CD4-positive, alpha-beta T cell (primary cell): ENCODE measurements at regions of chr12 and their contacts with region 1.

Region 1: DNA sequence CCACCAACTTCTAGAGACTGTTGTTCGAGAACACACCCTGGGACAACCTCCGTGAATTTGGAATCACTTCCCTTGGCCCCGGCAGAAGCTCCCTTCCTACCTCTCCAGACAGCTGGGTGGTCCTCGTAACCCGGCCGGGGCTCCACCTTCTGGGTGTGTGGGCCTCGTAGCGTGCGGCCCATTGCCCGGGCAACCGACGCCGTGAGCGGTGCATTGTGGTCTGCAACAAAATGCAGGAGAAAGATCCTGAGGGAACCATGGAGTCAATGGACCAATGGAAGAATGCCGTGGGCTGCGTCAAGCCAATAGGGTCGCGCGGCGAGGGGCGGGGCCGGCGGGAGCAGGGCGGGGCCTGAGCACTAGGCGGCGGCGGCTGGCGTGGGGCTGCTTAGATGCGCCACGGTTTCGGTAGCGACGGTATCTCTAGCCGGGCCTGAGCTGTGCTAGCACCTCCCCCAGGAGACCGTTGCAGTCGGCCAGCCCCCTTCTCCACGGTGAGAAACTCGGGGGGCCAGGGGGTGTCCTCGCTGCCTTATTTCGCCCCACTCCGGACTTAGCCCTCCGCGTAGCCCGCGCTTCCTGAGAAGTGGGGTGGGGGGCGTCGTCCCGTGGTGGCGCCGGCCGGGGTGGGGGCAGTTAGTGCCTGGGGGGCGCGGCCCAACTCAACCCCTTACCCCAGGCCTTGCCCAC is at the start of gene DYNLL1:
- DNase-seq: peak; percentile 95 to 98 (median 97)
- ATAC-seq: peak; percentile 96
- H3K4me3 ChIP-seq: peak within 1 kb of the TSS; percentile 82
- H3K4me3 Mint-ChIP-seq: peak within 1 kb of the TSS; percentile 92
- H3K27ac ChIP-seq: peak within 1 kb of the TSS; percentile 74 to 79
- H3K27ac Mint-ChIP-seq: peak within 1 kb of the TSS; percentile 82
- H3K4me1 ChIP-seq: peaks cover 18% of the 10 kb centered on the region
- H3K4me1 Mint-ChIP-seq: peaks cover 44% of the 10 kb centered on the region
- H3K27me3 ChIP-seq: no peaks in the 10 kb centered on the region
- H3K27me3 Mint-ChIP-seq: no peaks in the 10 kb centered on the region
- CTCF ChIP-seq: no peak
- total RNA-seq, gene DYNLL1: 23.6 to 24.5 TPM

Region 2: GRCh38 chr12:120356567-120357030 is 139.3 kb before region 1 on chr12:
- CTCF ChIA-PET with region 1: no interaction called
- POLR2A ChIA-PET with region 1: no interaction called
- intact Hi-C with region 1: loop called in 1 of 2 experiments (anchors 2 kb)
- DNase-seq: peak; percentile 56 to 81 (median 65)
- ATAC-seq: peak; percentile 88
- H3K4me3 ChIP-seq: no peak overlapping the region
- H3K4me3 Mint-ChIP-seq: no peak overlapping the region
- H3K27ac ChIP-seq: no peak overlapping the region
- H3K27ac Mint-ChIP-seq: no peak overlapping the region
- H3K4me1 ChIP-seq: peaks cover 5% of the 10 kb centered on the region
- H3K4me1 Mint-ChIP-seq: no peaks in the 10 kb centered on the region
- H3K27me3 ChIP-seq: peaks cover 18 to 28% of the 10 kb centered on the region in 2 experiments
- H3K27me3 Mint-ChIP-seq: peaks cover 54% of the 10 kb centered on the region
- CTCF ChIP-seq: peak; percentile 91

Region 3: GRCh38 chr12:120437754-120438494 is 57.9 kb before region 1 on chr12 and contains the start of gene COX6A1:
- CTCF ChIA-PET with region 1: interaction called, 3 read pairs
- POLR2A ChIA-PET with region 1: interaction called, 14 read pairs
- intact Hi-C with region 1: loop called in 1 of 2 experiments (anchors 5 kb)
- DNase-seq: peak; percentile 91 to 100 (median 96)
- ATAC-seq: peak; percentile 94
- H3K4me3 ChIP-seq: peak within 1 kb of the TSS; percentile 88
- H3K4me3 Mint-ChIP-seq: peak within 1 kb of the TSS; percentile 97
- H3K27ac ChIP-seq: peak within 1 kb of the TSS; percentile 69 to 88
- H3K27ac Mint-ChIP-seq: peak within 1 kb of the TSS; percentile 94
- H3K4me1 ChIP-seq: peaks cover 26% of the 10 kb centered on the region
- H3K4me1 Mint-ChIP-seq: peaks cover 31% of the 10 kb centered on the region
- H3K27me3 ChIP-seq: no peaks in the 10 kb centered on the region
- H3K27me3 Mint-ChIP-seq: no peaks in the 10 kb centered on the region
- CTCF ChIP-seq: no peak
- total RNA-seq, gene COX6A1: 112 to 116 TPM

Region 4: DNA sequence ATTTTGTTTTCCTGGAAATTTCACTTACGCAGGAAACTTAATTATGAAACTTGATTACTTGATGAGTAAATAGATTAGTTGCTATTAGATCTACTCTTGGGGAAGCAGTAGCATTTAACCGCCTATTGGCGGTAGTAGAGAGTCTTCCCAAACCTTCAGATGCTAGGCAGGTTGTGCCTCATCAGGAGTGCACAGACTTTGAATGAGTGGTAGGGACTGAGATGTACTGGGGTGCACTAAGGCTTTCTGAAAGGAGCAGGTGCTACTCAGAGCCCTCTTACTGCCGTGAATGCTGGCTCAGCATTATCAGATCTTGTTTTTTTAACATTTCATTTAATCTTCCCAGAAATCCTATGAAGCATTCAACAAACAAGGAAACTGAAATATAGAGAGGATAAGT is 41.9 kb before region 1 on chr12:
- CTCF ChIA-PET with region 1: interaction called, 4 read pairs
- POLR2A ChIA-PET with region 1: interaction called, 3 read pairs
- intact Hi-C with region 1: loop called in 1 of 2 experiments (anchors 5 kb)
- DNase-seq: peak in 4 of 14 experiments; percentile 32 to 64 (median 57)
- ATAC-seq: peak; percentile 95
- H3K4me3 ChIP-seq: no peak overlapping the region
- H3K4me3 Mint-ChIP-seq: peak overlapping the region; percentile 38
- H3K27ac ChIP-seq: no peak overlapping the region
- H3K27ac Mint-ChIP-seq: peak overlapping the region; percentile 55
- H3K4me1 ChIP-seq: peaks cover 9% of the 10 kb centered on the region
- H3K4me1 Mint-ChIP-seq: peaks cover 8% of the 10 kb centered on the region
- H3K27me3 ChIP-seq: no peaks in the 10 kb centered on the region
- H3K27me3 Mint-ChIP-seq: no peaks in the 10 kb centered on the region
- CTCF ChIP-seq: peak; percentile 61

Region 5: GRCh38 chr12:120528861-120529525 is 33.1 kb after region 1 on chr12 and contains the start of gene COQ5:
- CTCF ChIA-PET with region 1: no interaction called
- POLR2A ChIA-PET with region 1: interaction called, 24 read pairs
- intact Hi-C with region 1: loop called (anchors 1 to 2 kb)
- DNase-seq: peak; percentile 70 to 89 (median 79)
- ATAC-seq: peak; percentile 97
- H3K4me3 ChIP-seq: peak within 1 kb of the TSS; percentile 92
- H3K4me3 Mint-ChIP-seq: peak within 1 kb of the TSS; percentile 100
- H3K27ac ChIP-seq: peak within 1 kb of the TSS; percentile 69 to 73
- H3K27ac Mint-ChIP-seq: peak within 1 kb of the TSS; percentile 95
- H3K4me1 ChIP-seq: peaks cover 27% of the 10 kb centered on the region
- H3K4me1 Mint-ChIP-seq: peaks cover 32% of the 10 kb centered on the region
- H3K27me3 ChIP-seq: no peaks in the 10 kb centered on the region
- H3K27me3 Mint-ChIP-seq: no peaks in the 10 kb centered on the region
- CTCF ChIP-seq: no peak
- total RNA-seq, gene COQ5: 6.9 to 7.1 TPM

Region 6: DNA sequence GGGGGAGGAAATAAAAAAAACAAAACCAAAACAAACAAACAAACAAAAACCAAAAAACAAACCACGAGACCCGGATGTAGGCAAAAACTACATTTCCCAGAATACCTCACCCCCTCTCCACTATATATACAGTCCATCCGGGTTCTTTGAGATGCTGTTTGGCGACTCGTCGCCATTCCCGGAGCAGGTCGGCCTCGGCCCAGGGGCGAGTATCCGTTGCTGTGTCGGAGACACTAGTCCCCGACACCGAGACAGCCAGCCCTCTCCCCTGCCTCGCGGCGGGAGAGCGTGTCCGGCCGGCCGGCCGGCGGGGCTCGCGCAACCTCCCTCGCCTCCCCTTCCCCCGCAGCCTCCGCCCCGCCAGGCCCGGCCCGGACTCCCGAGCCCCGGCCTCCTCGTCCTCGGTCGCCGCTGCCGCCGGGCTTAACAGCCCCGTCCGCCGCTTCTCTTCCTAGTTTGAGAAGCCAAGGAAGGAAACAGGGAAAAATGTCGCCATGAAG is 38.4 kb after region 1 on chr12 and contains the start of gene RNF10:
- CTCF ChIA-PET with region 1: interaction called, 4 read pairs
- POLR2A ChIA-PET with region 1: interaction called, 24 read pairs
- intact Hi-C with region 1: loop called (anchors 1 to 2 kb)
- DNase-seq: peak; percentile 53 to 92 (median 68)
- ATAC-seq: peak; percentile 65
- H3K4me3 ChIP-seq: peak within 1 kb of the TSS; percentile 92
- H3K4me3 Mint-ChIP-seq: peak within 1 kb of the TSS; percentile 91
- H3K27ac ChIP-seq: peak within 1 kb of the TSS; percentile 66 to 89
- H3K27ac Mint-ChIP-seq: peak within 1 kb of the TSS; percentile 91
- H3K4me1 ChIP-seq: peaks cover 49% of the 10 kb centered on the region
- H3K4me1 Mint-ChIP-seq: peaks cover 62% of the 10 kb centered on the region
- H3K27me3 ChIP-seq: no peaks in the 10 kb centered on the region
- H3K27me3 Mint-ChIP-seq: no peaks in the 10 kb centered on the region
- CTCF ChIP-seq: no peak
- total RNA-seq, gene RNF10: 441 to 446 TPM

Region 7: GRCh38 chr12:120994589-120995337 is 498.9 kb after region 1 on chr12:
- CTCF ChIA-PET with region 1: no interaction called
- POLR2A ChIA-PET with region 1: no interaction called
- intact Hi-C with region 1: no loop called
- DNase-seq: no peak
- ATAC-seq: no peak
- H3K4me3 ChIP-seq: no peak overlapping the region
- H3K4me3 Mint-ChIP-seq: no peak overlapping the region
- H3K27ac ChIP-seq: no peak overlapping the region
- H3K27ac Mint-ChIP-seq: no peak overlapping the region
- H3K4me1 ChIP-seq: no peaks in the 10 kb centered on the region
- H3K4me1 Mint-ChIP-seq: no peaks in the 10 kb centered on the region
- H3K27me3 ChIP-seq: no peaks in the 10 kb centered on the region
- H3K27me3 Mint-ChIP-seq: peaks cover 16% of the 10 kb centered on the region
- CTCF ChIP-seq: no peak